PC-3 (cell line): ENCODE measurements at regions of chr6 and their contacts with region 1.

Region 1: DNA sequence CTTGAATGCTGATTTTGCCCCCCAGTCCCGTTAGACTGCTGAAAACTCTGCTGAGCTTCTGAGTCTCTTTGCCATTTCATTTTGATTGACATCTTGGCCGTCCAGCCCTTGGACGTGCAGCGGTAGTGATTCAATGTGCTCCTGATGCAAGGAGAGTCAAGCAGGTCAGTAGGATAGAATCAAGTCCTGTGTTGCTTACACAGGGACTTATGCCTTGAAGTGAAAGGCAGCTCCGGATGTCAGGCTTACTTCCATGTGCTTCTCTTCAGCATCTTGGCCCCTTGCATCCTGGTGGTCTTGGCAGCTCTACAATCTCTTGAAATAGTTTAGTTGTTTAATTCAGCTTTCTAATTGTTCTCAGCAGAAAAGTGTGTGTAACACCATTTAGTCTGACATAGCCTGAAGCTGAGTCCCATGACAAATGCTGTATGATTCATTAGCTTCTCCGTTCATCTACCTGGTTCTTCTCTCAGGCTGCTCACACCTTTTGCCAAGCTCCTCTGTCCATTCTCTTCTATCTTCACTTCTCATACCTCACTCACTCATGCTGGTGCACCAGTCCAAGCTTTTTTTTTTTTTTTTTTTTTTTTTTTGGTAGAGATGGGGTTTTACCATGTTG is 76.0 kb downstream of the EZR start:
- DNase-seq: no peak
- ATAC-seq: no peak
- H3K4me3 ChIP-seq: no peak overlapping the region
- H3K27ac ChIP-seq: no peak overlapping the region
- H3K4me1 ChIP-seq: peaks cover 7% of the 10 kb centered on the region
- H3K27me3 ChIP-seq: no peaks in the 10 kb centered on the region
- CTCF ChIP-seq: no peak

Region 2: GRCh38 chr6:158778005-158778527 is 34.9 kb after region 1 on chr6:
- CTCF ChIA-PET with region 1: no interaction called
- POLR2A ChIA-PET with region 1: interaction called, 10 read pairs
- intact Hi-C with region 1: no loop called
- DNase-seq: no peak
- ATAC-seq: no peak
- H3K4me3 ChIP-seq: no peak overlapping the region
- H3K27ac ChIP-seq: no peak overlapping the region
- H3K4me1 ChIP-seq: peaks cover 25% of the 10 kb centered on the region
- H3K27me3 ChIP-seq: no peaks in the 10 kb centered on the region
- CTCF ChIP-seq: no peak